Posterior cingulate gyrus (tissue), 11 donors: ENCODE measurements at regions of chr5 and their contacts with region 1.

Region 1: GRCh38 chr5:132736853-132737833 is at the start of gene KIF3A:
- DNase-seq: peak; percentile 95 to 99 (median 96)

Region 2: GRCh38 chr5:132251220-132251725 is 485.9 kb before region 1 on chr5:
- intact Hi-C with region 1: no loop called
- DNase-seq: peak in 7 of 10 donors; percentile 43 to 94 (median 71)

Region 3: DNA sequence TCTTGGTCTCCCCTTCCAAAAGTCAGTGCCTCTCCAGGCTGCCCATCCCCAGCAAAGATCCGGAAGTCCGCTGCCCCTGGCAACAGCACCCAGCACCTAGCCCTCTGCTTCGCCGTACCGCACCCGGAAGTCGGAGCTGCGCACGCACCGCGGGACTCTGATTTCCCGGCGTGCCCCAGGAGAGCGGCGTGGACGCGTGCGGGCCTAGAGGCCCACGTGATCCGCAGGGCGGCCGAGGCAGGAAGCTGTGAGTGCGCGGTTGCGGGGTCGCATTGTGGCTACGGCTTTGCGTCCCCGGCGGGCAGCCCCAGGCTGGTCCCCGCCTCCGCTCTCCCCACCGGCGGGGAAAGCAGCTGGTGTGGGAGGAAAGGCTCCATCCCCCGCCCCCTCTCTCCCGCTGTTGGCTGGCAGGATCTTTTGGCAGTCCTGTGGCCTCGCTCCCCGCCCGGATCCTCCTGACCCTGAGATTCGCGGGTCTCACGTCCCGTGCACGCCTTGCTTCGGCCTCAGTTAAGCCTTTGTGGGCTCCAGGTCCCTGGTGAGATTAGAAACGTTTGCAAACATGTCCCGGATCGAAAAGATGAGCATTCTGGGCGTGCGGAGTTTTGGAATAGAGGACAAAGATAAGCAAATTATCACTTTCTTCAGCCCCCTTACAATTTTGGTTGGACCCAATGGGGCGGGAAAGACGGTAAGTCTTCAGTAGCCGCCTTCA is 180.2 kb before region 1 on chr5 and contains the start of gene RAD50:
- intact Hi-C with region 1: loop called (anchors 10 kb)
- DNase-seq: peak; percentile 87 to 98 (median 90)